Posterior vena cava (tissue), 2 donors: ENCODE measurements at regions of chr2 and their contacts with region 1.

Region 1: GRCh38 chr2:37672104-37672869 is 845 bp upstream of the CDC42EP3 start:
- DNase-seq: peak; percentile 92

Region 2: GRCh38 chr2:37776487-37776886 is 104.2 kb after region 1 on chr2:
- intact Hi-C with region 1: loop called in 1 of 2 experiments (anchors 10 kb)
- DNase-seq: no peak